ENCODE measurements at regions of chr6 and their contacts with region 1.

Region 1: DNA sequence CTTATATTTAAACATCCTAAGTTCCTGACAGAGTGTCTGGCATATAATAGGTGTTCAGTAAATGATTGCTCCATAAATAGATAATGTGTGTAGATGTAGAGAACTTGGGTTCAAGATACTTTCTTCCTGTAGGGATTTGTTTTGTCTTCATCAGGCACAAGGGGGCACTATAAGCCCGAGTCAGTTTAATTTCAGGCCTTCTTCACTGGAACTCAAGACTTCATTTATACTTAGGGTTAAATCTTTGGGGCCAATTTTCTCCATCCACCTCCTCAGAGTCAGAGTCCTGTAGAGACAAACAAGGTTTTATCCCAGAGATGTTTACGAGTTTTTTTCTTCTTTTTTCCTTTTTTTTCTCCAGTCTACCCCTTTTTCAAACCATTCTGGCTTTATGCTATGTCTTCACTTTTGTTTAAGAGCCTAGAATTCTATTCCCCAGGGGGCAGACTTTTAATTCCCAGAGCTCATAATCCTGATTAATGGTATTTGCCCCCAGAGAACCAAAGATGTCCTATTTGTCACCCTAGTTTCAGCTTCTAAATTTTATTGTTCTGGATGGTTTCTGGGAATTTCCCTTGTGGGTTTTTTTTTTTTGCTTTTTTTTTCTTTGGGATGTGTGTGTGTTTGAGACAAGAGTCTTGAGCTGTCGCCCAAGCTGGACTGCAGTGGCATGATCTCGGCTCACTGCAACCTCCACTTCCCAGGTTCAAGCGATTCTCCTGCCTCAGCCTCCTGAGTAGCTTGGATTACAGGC is 88.4 kb downstream of the HFE start:
- DNase-seq: peak; percentile 77
- H3K4me3 Mint-ChIP-seq: no peak overlapping the region
- H3K27ac Mint-ChIP-seq: no peak overlapping the region
- H3K4me1 Mint-ChIP-seq: peaks cover 34% of the 10 kb centered on the region
- H3K27me3 Mint-ChIP-seq: no peaks in the 10 kb centered on the region

Region 2: GRCh38 chr6:26103770-26104456 is 71.7 kb before region 1 on chr6:
- CTCF ChIA-PET with region 1: no interaction called
- intact Hi-C with region 1: no loop called
- DNase-seq: peak; percentile 87
- H3K4me3 Mint-ChIP-seq: peak overlapping the region; percentile 80
- H3K27ac Mint-ChIP-seq: peak overlapping the region; percentile 94
- H3K4me1 Mint-ChIP-seq: peaks cover 18% of the 10 kb centered on the region
- H3K27me3 Mint-ChIP-seq: peaks cover 2% of the 10 kb centered on the region

Region 3: GRCh38 chr6:26136321-26136720 is 39.3 kb before region 1 on chr6:
- CTCF ChIA-PET with region 1: no interaction called
- intact Hi-C with region 1: no loop called
- DNase-seq: no peak
- H3K4me3 Mint-ChIP-seq: no peak overlapping the region
- H3K27ac Mint-ChIP-seq: no peak overlapping the region
- H3K4me1 Mint-ChIP-seq: peaks cover 28% of the 10 kb centered on the region
- H3K27me3 Mint-ChIP-seq: no peaks in the 10 kb centered on the region

Region 4: GRCh38 chr6:26196846-26197648 is 21.4 kb after region 1 on chr6:
- CTCF ChIA-PET with region 1: interaction called, 6 read pairs
- intact Hi-C with region 1: loop called (anchors 1 kb)
- DNase-seq: peak; percentile 86
- H3K4me3 Mint-ChIP-seq: peak overlapping the region; percentile 96
- H3K27ac Mint-ChIP-seq: peak overlapping the region; percentile 99
- H3K4me1 Mint-ChIP-seq: peaks cover 36% of the 10 kb centered on the region
- H3K27me3 Mint-ChIP-seq: peaks cover 5% of the 10 kb centered on the region

Region 5: GRCh38 chr6:26249957-26250697 is 74.5 kb after region 1 on chr6:
- CTCF ChIA-PET with region 1: interaction called, 4 read pairs
- intact Hi-C with region 1: loop called (anchors 1 kb)
- DNase-seq: peak; percentile 82
- H3K4me3 Mint-ChIP-seq: peak overlapping the region; percentile 86
- H3K27ac Mint-ChIP-seq: peak overlapping the region; percentile 100
- H3K4me1 Mint-ChIP-seq: peaks cover 17% of the 10 kb centered on the region
- H3K27me3 Mint-ChIP-seq: no peaks in the 10 kb centered on the region

Region 6: GRCh38 chr6:26329763-26330511 is 154.3 kb after region 1 on chr6:
- CTCF ChIA-PET with region 1: no interaction called
- intact Hi-C with region 1: loop called (anchors 2 kb)
- DNase-seq: peak; percentile 81
- H3K4me3 Mint-ChIP-seq: peak overlapping the region; percentile 82
- H3K27ac Mint-ChIP-seq: peak overlapping the region; percentile 90
- H3K4me1 Mint-ChIP-seq: peaks cover 35% of the 10 kb centered on the region
- H3K27me3 Mint-ChIP-seq: peaks cover 28% of the 10 kb centered on the region

Region 7: GRCh38 chr6:26342106-26343004 is 166.8 kb after region 1 on chr6:
- CTCF ChIA-PET with region 1: no interaction called
- intact Hi-C with region 1: no loop called
- DNase-seq: peak; percentile 53
- H3K4me3 Mint-ChIP-seq: peak overlapping the region; percentile 77
- H3K27ac Mint-ChIP-seq: peak overlapping the region; percentile 39
- H3K4me1 Mint-ChIP-seq: peaks cover 4% of the 10 kb centered on the region
- H3K27me3 Mint-ChIP-seq: peaks cover 2% of the 10 kb centered on the region

Region 8: DNA sequence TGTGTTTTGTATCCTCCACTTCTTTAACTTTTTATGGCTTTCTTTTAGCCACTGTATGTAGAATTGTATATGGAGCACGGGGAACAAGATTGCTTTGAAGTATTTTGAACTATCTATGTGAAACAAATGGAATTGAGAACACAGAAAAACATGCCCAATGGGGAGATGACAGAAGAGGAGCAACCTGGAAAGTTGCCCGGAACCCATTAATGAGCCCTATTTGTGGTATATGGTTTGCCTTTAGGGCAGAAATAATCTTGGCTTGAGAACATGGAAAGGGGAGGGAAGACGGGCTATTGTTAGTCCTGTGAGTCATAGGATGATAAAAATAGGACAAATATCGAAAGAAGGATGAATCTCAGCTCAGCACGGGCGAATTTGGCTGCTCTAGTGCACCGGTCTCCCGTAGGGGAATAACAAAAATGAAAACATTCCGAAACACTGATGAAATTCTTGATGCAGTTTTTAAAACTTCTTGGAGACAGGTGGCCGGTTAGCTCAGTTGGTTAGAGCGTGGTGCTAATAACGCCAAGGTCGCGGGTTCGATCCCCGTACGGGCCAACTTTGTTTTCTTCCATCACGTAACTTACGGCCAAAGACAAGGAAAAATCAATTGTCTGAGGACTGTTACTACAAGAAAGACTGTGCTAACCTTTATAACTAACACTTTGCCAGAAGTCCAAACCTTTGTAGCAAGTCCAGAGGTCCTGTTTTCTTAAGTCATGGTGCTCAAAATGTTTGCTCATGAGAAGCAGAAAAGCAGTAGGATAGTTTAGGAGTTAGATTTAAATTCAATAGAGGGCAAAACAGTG is 378.2 kb after region 1 on chr6:
- CTCF ChIA-PET with region 1: no interaction called
- intact Hi-C with region 1: loop called (anchors 5 kb)
- DNase-seq: peak; percentile 91
- H3K4me3 Mint-ChIP-seq: no peak overlapping the region
- H3K27ac Mint-ChIP-seq: no peak overlapping the region
- H3K4me1 Mint-ChIP-seq: peaks cover 26% of the 10 kb centered on the region
- H3K27me3 Mint-ChIP-seq: no peaks in the 10 kb centered on the region

Region 9: DNA sequence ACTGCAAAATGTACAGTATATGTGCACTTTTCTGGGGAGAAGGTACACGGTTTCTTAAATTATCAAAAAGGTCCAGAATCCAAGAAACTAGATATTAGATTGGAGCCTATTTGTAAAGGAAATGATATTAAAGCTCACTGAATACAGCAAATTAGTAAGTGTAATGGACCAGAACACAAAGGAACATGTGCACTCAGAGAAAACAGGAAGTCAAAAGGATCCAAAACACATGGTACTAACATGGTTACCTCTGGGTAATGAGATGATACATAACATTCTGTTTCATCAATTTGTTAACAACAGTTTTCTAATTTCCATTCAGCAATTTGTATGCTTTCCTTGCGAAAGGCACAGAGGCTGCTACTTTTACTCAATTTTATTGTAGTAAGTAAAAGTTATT is 465.2 kb after region 1 on chr6:
- CTCF ChIA-PET with region 1: no interaction called
- intact Hi-C with region 1: no loop called
- DNase-seq: no peak
- H3K4me3 Mint-ChIP-seq: no peak overlapping the region
- H3K27ac Mint-ChIP-seq: no peak overlapping the region
- H3K4me1 Mint-ChIP-seq: no peaks in the 10 kb centered on the region
- H3K27me3 Mint-ChIP-seq: no peaks in the 10 kb centered on the region

Measured in activated naive CD4-positive, alpha-beta T cell treated with anti-CD3 and anti-CD28 coated beads for 36 hours (primary cell).